PC-9 (cell line): ENCODE measurements at regions of chr2 and their contacts with region 1.

Region 1: GRCh38 chr2:69366-70344 is 23.4 kb upstream of the FAM110C start:
- DNase-seq: peak; percentile 48 to 68
- H3K4me3 ChIP-seq: no peak overlapping the region
- H3K27ac ChIP-seq: peak overlapping the region; percentile 61
- H3K4me1 ChIP-seq: peaks cover 28% of the 10 kb centered on the region
- H3K27me3 ChIP-seq: no peaks in the 10 kb centered on the region
- CTCF ChIP-seq: no peak

Region 2: DNA sequence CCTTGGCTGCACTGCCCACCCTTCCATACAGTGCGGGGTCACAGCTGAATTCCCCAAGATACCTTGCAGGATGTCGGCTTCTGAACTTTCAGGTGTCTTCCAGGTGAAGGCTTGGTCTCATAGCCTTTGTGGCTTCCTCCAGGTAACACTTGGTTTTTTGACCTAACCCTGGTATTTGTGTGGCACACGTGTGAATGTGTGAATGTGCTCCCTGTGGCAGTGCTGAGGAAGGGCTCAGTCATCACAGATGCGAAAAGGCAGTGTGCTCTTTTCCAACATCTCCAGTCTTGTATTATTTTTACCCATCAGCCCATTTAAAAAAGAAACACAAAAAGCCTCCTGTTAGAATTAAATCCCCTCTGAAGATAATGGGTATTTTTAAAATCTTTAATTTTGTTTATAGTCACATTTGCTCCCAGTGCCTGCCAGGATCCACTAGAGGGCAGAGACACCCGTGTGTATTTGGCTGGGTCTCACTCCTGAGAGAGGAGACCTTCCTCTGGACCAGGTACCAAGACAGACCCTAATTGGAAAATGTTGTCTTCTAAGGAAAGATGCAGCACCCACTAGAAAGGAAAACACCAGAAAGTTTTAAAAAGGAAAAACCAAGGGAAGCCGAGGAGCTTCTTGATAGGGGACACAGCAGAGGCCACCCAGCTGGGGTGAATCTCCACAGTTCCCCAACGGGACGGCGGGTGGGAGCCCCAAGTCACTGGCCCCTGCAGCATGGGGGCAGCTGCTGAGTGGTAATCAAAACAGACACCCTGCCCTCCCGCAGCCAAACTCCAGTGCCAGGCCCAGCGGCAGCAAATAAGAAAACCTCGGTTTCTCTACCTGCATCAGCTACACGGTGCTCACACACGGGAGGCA is 51.0 kb before region 1 on chr2:
- CTCF ChIA-PET with region 1: no interaction called
- POLR2A ChIA-PET with region 1: interaction called, 13 read pairs
- intact Hi-C with region 1: no loop called
- DNase-seq: no peak
- H3K4me3 ChIP-seq: no peak overlapping the region
- H3K27ac ChIP-seq: no peak overlapping the region
- H3K4me1 ChIP-seq: peaks cover 6% of the 10 kb centered on the region; the same call in 1 of the 2 replicates
- H3K27me3 ChIP-seq: no peaks in the 10 kb centered on the region
- CTCF ChIP-seq: peak; percentile 84

Region 3: GRCh38 chr2:1070616-1071015 is 1001.0 kb after region 1 on chr2:
- CTCF ChIA-PET with region 1: no interaction called
- POLR2A ChIA-PET with region 1: no interaction called
- intact Hi-C with region 1: no loop called
- DNase-seq: no peak
- H3K4me3 ChIP-seq: no peak overlapping the region
- H3K27ac ChIP-seq: no peak overlapping the region
- H3K4me1 ChIP-seq: no peaks in the 10 kb centered on the region
- H3K27me3 ChIP-seq: peaks cover 80% of the 10 kb centered on the region
- CTCF ChIP-seq: no peak